IMR-90 (cell line): ENCODE measurements at regions of chr9 and their contacts with region 1.

Region 1: DNA sequence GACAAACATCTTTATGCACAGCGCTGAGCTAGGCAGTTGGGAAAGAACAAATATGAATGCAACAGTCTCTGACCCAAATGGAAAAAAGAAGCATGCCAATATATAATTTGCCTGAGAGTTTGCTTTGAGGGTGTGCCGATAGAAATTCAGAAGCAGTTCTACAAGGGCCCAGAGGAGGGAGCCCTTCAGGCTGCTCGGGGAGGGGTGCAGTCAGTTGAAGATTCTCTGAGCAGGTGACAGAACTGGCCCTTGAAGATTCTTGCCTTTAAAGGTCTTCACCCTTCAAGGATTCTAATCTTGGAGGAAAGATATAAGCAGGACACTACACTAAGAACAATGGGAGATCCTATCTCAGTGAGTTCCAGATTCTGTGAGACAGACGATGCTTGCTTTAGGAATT is 3.7 kb upstream of the PAPPA start:
- DNase-seq: no peak
- ATAC-seq: no peak
- H3K4me3 ChIP-seq: no peak overlapping the region
- H3K27ac ChIP-seq: no peak overlapping the region
- H3K4me1 ChIP-seq: peaks cover 5% of the 10 kb centered on the region
- H3K27me3 ChIP-seq: no peaks in the 10 kb centered on the region
- CTCF ChIP-seq: peak; percentile 46
- POLR2A ChIP-seq: no peak
- RAD21 ChIP-seq: peak; percentile 44

Region 2: GRCh38 chr9:115694014-115694413 is 455.8 kb before region 1 on chr9:
- CTCF ChIA-PET with region 1: no interaction called
- POLR2A ChIA-PET with region 1: no interaction called
- dilution Hi-C with region 1: no loop called
- in situ Hi-C with region 1: loop called (anchors 10 kb)
- intact Hi-C with region 1: no loop called
- DNase-seq: peak; percentile 93
- ATAC-seq: peak; percentile 69
- H3K4me3 ChIP-seq: no peak overlapping the region
- H3K27ac ChIP-seq: no peak overlapping the region
- H3K4me1 ChIP-seq: peaks cover 13% of the 10 kb centered on the region
- H3K27me3 ChIP-seq: no peaks in the 10 kb centered on the region
- CTCF ChIP-seq: peak; percentile 79
- POLR2A ChIP-seq: no peak
- RAD21 ChIP-seq: peak; percentile 86

Region 3: GRCh38 chr9:115883457-115884329 is 266.2 kb before region 1 on chr9:
- CTCF ChIA-PET with region 1: interaction called, 4 read pairs
- POLR2A ChIA-PET with region 1: no interaction called
- dilution Hi-C with region 1: no loop called
- in situ Hi-C with region 1: no loop called
- intact Hi-C with region 1: loop called (anchors 1 kb)
- DNase-seq: peak; percentile 60
- ATAC-seq: peak; percentile 75
- H3K4me3 ChIP-seq: no peak overlapping the region
- H3K27ac ChIP-seq: peak overlapping the region; percentile 1; the same call in 1 of the 2 replicates
- H3K4me1 ChIP-seq: peaks cover 11% of the 10 kb centered on the region
- H3K27me3 ChIP-seq: no peaks in the 10 kb centered on the region
- CTCF ChIP-seq: peak; percentile 66
- POLR2A ChIP-seq: no peak
- RAD21 ChIP-seq: peak; percentile 83

Region 4: DNA sequence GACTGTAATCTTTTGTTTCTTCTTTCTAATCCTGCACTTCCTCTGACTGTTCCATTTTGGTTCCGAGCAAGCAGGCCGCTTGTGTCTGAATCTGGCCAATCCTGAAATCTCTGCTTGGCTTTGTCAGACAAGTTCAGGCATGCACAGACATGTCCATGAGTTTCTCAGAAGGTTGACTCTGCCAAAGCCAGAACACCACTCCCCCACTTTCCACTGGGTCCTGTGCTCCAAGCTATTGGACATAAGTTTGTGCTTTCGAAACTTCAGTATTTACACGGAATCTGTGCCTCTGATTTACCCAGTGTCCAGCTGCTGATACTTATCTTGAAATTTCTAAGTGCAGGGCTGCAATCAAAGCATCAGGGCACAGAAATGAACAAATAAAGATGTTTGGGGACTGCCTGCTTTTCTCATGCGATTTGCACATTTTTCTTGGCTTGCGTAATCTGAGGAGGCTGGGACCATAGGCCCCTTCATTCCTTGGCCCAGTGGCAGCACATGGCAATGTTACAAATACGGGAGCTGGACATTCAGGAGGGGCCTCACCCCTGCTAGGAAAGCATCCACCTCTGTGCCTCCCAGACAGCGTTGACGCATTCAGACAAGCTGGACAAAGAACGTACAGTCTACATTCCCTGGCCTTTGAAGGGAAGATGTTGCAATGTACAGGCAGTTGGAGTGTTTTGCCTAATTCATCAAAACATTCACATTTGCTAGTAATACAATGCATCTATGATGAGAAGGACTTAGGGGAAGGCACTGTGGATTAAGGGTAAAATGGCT is 205.5 kb before region 1 on chr9:
- CTCF ChIA-PET with region 1: interaction called, 5 read pairs
- POLR2A ChIA-PET with region 1: interaction called, 22 read pairs
- dilution Hi-C with region 1: no loop called
- in situ Hi-C with region 1: no loop called
- intact Hi-C with region 1: loop called (anchors 1 kb)
- DNase-seq: peak; percentile 100
- ATAC-seq: peak; percentile 87
- H3K4me3 ChIP-seq: no peak overlapping the region
- H3K27ac ChIP-seq: peak overlapping the region; percentile 96
- H3K4me1 ChIP-seq: peaks cover 25% of the 10 kb centered on the region
- H3K27me3 ChIP-seq: no peaks in the 10 kb centered on the region
- CTCF ChIP-seq: no peak
- POLR2A ChIP-seq: peak; percentile 65
- RAD21 ChIP-seq: peak; percentile 32; the same call in 1 of the 2 replicates

Region 5: DNA sequence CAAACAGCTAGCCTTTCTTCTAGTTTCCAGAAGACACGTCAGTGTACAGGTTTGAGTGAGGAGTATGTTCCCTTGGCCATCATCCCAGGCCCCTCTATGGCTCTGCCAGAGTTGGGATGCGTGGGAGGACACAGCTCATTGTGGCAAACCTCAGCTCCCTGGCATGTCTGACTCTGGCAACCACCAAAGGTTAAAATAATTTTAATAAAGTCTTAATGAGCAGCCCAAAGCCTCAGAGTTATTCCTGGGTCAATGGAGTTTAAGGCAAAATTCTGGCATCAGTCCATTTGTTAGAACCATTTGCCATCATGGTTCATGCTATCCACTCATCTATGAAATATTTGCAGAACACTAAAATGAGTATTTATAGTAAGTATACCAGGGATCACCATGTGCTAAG is 76.0 kb before region 1 on chr9:
- CTCF ChIA-PET with region 1: no interaction called
- POLR2A ChIA-PET with region 1: no interaction called
- dilution Hi-C with region 1: no loop called
- in situ Hi-C with region 1: no loop called
- intact Hi-C with region 1: loop called (anchors 5 kb)
- DNase-seq: peak; percentile 67
- ATAC-seq: no peak
- H3K4me3 ChIP-seq: no peak overlapping the region
- H3K27ac ChIP-seq: peak overlapping the region; percentile 34; the same call in 1 of the 2 replicates
- H3K4me1 ChIP-seq: peaks cover 3% of the 10 kb centered on the region
- H3K27me3 ChIP-seq: no peaks in the 10 kb centered on the region
- CTCF ChIP-seq: no peak
- POLR2A ChIP-seq: no peak
- RAD21 ChIP-seq: no peak

Region 6: GRCh38 chr9:116572095-116572748 is 422.4 kb after region 1 on chr9:
- CTCF ChIA-PET with region 1: interaction called, 9 read pairs
- POLR2A ChIA-PET with region 1: no interaction called
- dilution Hi-C with region 1: no loop called
- in situ Hi-C with region 1: loop called (anchors 10 kb)
- intact Hi-C with region 1: loop called (anchors 5 kb)
- DNase-seq: peak; percentile 84
- ATAC-seq: peak; percentile 95
- H3K4me3 ChIP-seq: no peak overlapping the region
- H3K27ac ChIP-seq: no peak overlapping the region
- H3K4me1 ChIP-seq: peaks cover 5% of the 10 kb centered on the region; the same call in 1 of the 2 replicates
- H3K27me3 ChIP-seq: no peaks in the 10 kb centered on the region
- CTCF ChIP-seq: peak; percentile 94
- POLR2A ChIP-seq: peak; percentile 59; the same call in 1 of the 2 replicates
- RAD21 ChIP-seq: peak; percentile 99